CD4-positive, alpha-beta memory T cell (primary cell): ENCODE measurements at regions of chr3 and their contacts with region 1.

Region 1: DNA sequence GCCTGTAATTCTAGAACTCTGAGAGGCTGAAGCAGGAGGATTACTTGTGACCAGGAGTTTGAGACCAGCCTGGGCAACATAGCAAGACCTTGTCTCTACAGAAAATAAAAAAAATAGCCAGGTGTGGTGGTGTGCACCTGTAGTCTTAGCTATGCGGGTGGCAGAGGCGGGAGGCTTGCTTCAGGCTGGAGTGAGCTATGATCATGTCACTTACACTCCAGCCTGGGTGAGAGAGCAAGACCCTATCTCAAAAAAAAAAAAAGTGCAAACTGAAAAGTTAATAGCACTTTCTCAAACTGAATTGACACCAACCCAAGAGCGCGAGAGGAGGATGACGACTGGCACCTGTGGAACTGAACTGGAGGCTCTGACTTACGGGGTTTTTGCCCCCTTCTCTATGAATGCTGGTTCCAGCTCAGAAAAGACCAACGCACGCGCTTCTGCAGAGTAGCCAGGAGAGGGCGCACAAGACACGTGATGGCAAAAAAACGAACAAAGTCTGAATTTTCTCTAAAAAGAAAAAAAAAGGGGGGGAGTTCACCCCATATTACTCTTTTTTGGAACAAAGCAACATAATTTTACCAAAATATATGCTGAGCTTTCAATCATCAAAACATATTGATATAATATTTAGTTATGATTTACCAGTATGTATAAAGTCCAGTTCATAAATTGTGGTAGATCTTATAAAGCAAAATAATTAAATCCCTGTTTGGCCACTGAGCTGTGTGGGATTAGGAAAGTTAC is 23.7 kb downstream of the CFAP92 start:
- DNase-seq: peak; percentile 58 to 70 (median 62)
- H3K4me3 ChIP-seq: no peak overlapping the region
- H3K4me3 Mint-ChIP-seq: no peak overlapping the region
- H3K27ac ChIP-seq: no peak overlapping the region
- H3K27ac Mint-ChIP-seq: peak overlapping the region in 1 of 7 donors; percentile 19
- H3K4me1 ChIP-seq: no peaks in the 10 kb centered on the region
- H3K4me1 Mint-ChIP-seq: peaks cover 2 to 6% (median 3%) of the 10 kb centered on the region in 4 donors
- H3K27me3 ChIP-seq: no peaks in the 10 kb centered on the region
- H3K27me3 Mint-ChIP-seq: peaks cover 0 to 2% of the 10 kb centered on the region in 2 donors

Region 2: DNA sequence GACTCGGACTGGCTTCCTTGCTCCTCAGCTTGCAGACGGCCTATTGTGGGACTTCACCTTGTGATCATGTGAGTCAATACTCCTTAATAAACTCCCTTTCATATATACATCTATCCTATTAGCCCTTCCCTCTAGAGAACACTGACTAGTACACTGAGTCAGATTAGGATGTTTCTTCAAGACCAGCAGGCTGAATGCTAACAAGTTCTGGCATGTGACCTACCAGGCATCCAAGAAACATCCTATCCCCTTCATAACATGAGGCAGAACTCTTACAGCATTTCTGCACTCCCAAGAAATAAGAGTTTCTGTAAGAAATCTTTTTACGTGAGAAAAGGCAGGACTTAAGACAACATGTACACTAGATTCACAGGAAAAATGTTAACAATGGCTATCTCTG is 14.4 kb after region 1 on chr3:
- CTCF ChIA-PET with region 1: interaction called, 17 read pairs
- POLR2A ChIA-PET with region 1: no interaction called
- intact Hi-C with region 1: no loop called
- DNase-seq: no peak
- H3K4me3 ChIP-seq: no peak overlapping the region
- H3K4me3 Mint-ChIP-seq: no peak overlapping the region
- H3K27ac ChIP-seq: no peak overlapping the region
- H3K27ac Mint-ChIP-seq: peak overlapping the region in 1 of 7 donors; percentile 50
- H3K4me1 ChIP-seq: no peaks in the 10 kb centered on the region
- H3K4me1 Mint-ChIP-seq: no peaks in the 10 kb centered on the region
- H3K27me3 ChIP-seq: no peaks in the 10 kb centered on the region
- H3K27me3 Mint-ChIP-seq: peaks cover 0 to 2% of the 10 kb centered on the region in 2 donors

Region 3: GRCh38 chr3:129026728-129027543 is 56.8 kb after region 1 on chr3:
- CTCF ChIA-PET with region 1: interaction called, 40 read pairs
- POLR2A ChIA-PET with region 1: interaction called, 5 read pairs
- intact Hi-C with region 1: loop called (anchors 2 kb)
- DNase-seq: peak; percentile 91 to 95 (median 94)
- H3K4me3 ChIP-seq: peak overlapping the region; percentile 42 to 57
- H3K4me3 Mint-ChIP-seq: peak overlapping the region; percentile 76 to 88 (median 85)
- H3K27ac ChIP-seq: peak overlapping the region; percentile 55
- H3K27ac Mint-ChIP-seq: peak overlapping the region; percentile 91 to 97 (median 97)
- H3K4me1 ChIP-seq: peaks cover 16% of the 10 kb centered on the region
- H3K4me1 Mint-ChIP-seq: peaks cover 10 to 25% (median 16%) of the 10 kb centered on the region in 4 donors
- H3K27me3 ChIP-seq: no peaks in the 10 kb centered on the region
- H3K27me3 Mint-ChIP-seq: no peaks in the 10 kb centered on the region

Region 4: DNA sequence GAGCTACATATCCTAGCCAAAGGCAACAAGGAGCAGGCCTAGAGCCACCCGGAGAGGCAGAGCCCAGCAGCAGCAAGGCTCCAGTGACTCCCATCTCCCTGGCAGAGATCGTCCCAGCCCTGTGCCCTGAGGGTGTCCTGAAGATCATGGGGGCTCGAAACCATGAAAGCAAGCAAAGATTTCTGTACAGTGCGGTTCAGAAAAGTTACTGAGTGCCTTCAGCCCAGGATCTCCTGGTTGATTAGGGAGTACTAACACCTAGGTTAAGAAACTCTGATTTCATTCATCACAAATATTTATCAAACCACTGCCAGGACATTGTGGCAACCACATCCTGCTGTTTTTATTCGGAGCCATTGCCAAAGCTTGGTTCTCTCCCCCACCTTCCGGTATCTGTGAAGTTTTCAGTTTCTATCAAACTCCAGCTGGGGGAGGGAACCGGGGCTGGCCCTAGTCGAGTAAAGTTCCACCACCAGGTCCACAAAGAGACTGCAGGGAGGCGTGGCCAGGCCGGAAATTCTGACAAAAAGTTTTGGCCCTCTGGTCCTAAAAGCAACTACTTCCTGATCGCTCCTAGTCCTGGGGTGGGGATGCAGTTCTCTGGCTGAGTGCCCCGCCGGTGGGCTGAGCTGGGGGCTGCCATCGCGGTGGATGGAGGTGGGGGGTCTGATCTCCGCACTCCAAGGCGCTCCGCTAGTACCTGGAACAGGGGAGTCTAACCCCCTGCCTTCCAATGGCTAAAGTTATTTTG is 150.3 kb after region 1 on chr3:
- CTCF ChIA-PET with region 1: interaction called, 20 read pairs
- POLR2A ChIA-PET with region 1: interaction called, 5 read pairs
- intact Hi-C with region 1: no loop called
- DNase-seq: peak; percentile 92 to 97 (median 95)
- H3K4me3 ChIP-seq: peak overlapping the region; percentile 73 to 79
- H3K4me3 Mint-ChIP-seq: peak overlapping the region; percentile 92 to 99 (median 94)
- H3K27ac ChIP-seq: peak overlapping the region; percentile 62
- H3K27ac Mint-ChIP-seq: peak overlapping the region; percentile 94 to 99 (median 98)
- H3K4me1 ChIP-seq: peaks cover 54% of the 10 kb centered on the region
- H3K4me1 Mint-ChIP-seq: peaks cover 34 to 70% (median 52%) of the 10 kb centered on the region in 4 donors
- H3K27me3 ChIP-seq: no peaks in the 10 kb centered on the region
- H3K27me3 Mint-ChIP-seq: no peaks in the 10 kb centered on the region

Region 5: DNA sequence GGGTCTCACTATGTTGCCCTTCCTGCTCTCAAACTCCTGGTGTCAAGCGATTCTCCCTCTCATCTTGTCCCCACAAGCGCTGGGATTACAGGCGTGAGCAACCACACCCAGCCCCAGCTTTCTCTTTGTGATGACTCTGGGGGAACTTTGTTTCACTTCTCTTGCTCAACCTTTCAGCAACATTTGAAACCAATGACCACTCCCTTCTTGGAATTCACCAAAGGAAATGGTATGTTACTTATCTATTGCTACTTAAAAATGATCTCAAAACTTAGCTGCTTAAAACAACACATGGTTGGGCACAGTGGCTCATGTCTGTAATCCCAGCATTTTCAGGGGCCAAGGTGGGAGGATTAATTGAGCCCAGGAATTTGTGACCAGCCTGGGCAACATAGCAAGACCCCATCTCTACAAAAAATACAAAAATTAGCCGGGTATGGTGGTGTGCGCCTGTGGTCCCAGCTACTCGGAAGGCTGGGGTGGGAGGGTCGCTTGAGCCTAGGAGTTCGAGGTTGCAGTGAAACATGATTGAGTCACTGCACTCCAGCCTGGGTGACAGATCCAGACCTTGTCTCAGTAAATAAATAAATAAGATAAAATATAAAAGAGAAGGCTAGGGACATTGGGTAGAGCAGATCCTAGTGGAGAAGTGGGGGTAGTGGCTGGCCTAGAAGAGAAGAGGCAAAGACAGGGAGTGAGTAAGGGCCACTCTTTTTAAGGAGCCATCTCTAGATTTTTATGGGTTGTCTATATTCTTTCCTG is 269.0 kb after region 1 on chr3:
- CTCF ChIA-PET with region 1: interaction called, 253 read pairs
- POLR2A ChIA-PET with region 1: no interaction called
- intact Hi-C with region 1: no loop called
- DNase-seq: peak in 1 of 5 donors; percentile 17
- H3K4me3 ChIP-seq: no peak overlapping the region
- H3K4me3 Mint-ChIP-seq: peak overlapping the region; percentile 33 to 78 (median 64)
- H3K27ac ChIP-seq: no peak overlapping the region
- H3K27ac Mint-ChIP-seq: peak overlapping the region in 5 of 7 donors; percentile 17 to 91 (median 76)
- H3K4me1 ChIP-seq: peaks cover 28% of the 10 kb centered on the region
- H3K4me1 Mint-ChIP-seq: peaks cover 7 to 18% (median 13%) of the 10 kb centered on the region in 4 donors
- H3K27me3 ChIP-seq: no peaks in the 10 kb centered on the region
- H3K27me3 Mint-ChIP-seq: no peaks in the 10 kb centered on the region

Region 6: DNA sequence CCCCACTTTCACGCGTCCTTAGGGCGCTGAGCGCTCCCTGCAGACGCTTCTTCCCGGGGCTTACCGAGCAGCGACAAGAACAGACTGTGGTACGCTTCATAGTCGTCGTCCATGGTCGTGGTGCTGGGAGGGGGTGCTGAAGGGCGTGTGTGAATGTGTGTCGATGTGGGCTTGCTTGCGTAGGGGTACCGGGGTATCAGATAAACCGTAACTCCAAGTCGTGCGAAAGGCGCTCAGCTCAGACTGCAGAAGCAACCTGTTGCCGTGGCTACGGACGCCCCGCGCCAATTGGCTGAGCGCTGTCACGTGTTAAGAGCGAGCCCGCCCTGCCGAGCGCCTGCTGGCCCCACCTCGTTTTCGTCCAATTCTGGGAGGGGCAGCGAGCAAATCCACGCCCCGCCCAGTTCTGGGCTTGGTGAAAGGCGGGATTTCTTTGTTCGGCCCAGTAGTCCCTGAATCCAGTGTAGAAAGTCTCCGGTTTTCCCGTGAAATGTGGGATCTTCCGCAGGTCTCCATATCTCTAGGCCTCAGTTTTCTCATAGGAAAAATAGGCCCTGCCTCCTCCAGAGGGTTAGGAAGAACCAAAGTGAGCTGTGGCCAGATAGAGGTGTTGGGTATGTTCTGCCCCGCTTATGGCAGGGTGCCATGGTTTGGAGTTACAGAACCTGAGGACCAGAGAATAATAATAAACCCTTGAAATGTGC is 458.4 kb after region 1 on chr3 and contains the start of gene EFCAB12:
- CTCF ChIA-PET with region 1: no interaction called
- POLR2A ChIA-PET with region 1: no interaction called
- intact Hi-C with region 1: loop called (anchors 10 kb)
- DNase-seq: peak; percentile 84 to 90 (median 87)
- H3K4me3 ChIP-seq: peak within 1 kb of the TSS; percentile 49 to 50
- H3K4me3 Mint-ChIP-seq: peak within 1 kb of the TSS; percentile 86 to 91 (median 88)
- H3K27ac ChIP-seq: peak within 1 kb of the TSS; percentile 19
- H3K27ac Mint-ChIP-seq: peak within 1 kb of the TSS; percentile 79 to 93 (median 89)
- H3K4me1 ChIP-seq: peaks cover 15% of the 10 kb centered on the region
- H3K4me1 Mint-ChIP-seq: peaks cover 12 to 22% (median 18%) of the 10 kb centered on the region in 4 donors
- H3K27me3 ChIP-seq: no peaks in the 10 kb centered on the region
- H3K27me3 Mint-ChIP-seq: no peaks in the 10 kb centered on the region
- total RNA-seq, gene EFCAB12: 1.5 to 1.6 TPM